ENCODE measurements at regions of chr19 and their contacts with region 1.

Region 1: DNA sequence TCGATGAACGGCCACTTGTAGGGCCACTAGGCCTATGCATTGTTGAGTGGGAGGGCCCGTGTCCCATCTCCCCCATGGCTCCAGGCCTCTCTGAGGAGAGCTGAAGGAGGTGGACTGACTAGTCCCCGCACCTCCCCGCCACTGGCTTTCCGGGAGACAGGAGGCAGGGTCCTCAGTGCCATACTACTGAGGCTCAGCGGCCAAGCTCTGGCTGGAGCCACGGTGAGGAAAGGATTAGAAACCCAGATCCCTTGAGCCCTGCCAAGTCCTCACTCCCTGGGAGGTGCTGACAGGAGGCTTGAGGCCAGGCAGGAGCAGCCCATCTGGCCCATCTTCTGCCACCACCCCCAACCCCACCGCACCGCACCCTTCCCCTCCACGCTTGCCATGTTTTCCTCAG is 29.0 kb downstream of the CCDC8 start:
- DNase-seq: peak; percentile 46 to 47
- ATAC-seq: peak; percentile 62 to 86 (median 78)
- H3K4me3 ChIP-seq: no peak overlapping the region
- H3K27ac ChIP-seq: peak overlapping the region in 3 of 10 donors; percentile 19 to 39 (median 30)
- H3K4me1 ChIP-seq: peaks cover 0 to 41% (median 18%) of the 10 kb centered on the region in 9 donors
- H3K27me3 ChIP-seq: no peaks in the 10 kb centered on the region
- CTCF ChIP-seq: no peak

Region 2: DNA sequence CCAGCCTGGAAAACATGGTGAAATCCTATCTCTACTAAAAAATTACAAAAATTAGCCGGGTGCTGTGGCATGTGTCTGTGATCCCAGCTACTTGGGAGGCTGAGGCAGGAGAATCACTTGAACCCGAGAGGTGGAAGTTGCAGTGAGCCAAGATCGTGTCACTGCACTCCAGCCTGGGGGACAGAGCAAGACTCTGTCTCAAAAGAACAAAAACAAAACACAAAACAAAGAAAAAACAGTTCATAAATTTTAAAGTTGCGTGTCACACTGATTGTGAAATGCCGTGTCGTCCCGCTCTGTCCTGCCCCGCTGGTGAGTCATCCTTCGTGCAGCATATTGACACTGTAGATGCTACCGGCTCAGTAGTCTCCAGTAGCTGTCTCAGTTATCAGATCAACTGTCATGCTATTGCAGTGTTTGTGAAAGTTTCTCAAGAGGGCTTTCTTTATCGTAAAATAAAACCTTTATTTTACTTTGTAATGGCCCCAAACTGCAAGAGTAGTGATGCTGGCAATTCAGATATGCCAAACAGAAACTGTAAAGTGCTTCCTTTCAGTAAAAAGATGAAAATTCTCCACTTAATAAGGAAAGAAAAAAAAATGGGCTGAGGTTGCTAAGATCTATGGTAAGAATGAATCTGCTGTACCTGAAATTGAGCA is 191.3 kb before region 1 on chr19:
- intact Hi-C with region 1: loop called in 1 of 10 experiments (anchors 5 kb)
- DNase-seq: no peak
- ATAC-seq: peak in 1 of 8 donors; percentile 73
- H3K4me3 ChIP-seq: no peak overlapping the region
- H3K27ac ChIP-seq: peak overlapping the region in 1 of 10 donors; percentile 60
- H3K4me1 ChIP-seq: peaks cover 0 to 20% (median 0%) of the 10 kb centered on the region in 9 donors
- H3K27me3 ChIP-seq: peaks cover 0 to 85% (median 55%) of the 10 kb centered on the region in 7 donors
- CTCF ChIP-seq: no peak

Region 3: DNA sequence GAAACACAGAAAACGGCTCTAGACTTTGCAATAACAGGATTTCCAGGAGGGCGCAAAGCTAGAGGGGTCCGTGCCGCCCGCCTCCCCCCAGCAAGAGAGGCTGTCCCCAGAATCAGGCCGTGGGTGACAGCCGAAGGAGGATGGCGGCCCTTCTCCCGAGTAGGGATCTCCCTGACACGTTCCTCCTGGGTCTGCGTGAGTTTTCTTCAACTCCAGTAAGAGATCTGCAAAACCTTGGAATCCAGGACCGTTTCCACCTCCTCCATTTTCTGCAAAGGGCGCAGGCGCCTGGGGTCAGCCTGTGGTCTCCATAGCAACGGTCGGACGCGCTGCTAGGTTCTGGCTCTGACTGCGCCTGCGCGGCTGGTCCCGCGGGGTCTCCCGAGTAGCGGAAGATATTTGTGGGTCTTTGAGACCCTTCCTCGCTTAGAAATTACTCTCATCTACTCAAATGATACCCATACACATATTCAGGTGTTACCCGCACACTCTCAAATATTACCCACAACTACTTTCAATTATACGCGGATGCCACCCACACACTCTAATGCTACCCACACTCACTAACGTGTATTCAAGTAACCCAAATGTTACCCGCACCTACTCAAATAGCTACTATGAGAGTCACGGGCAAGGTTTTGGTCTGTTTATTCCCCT is 42.2 kb after region 1 on chr19:
- intact Hi-C with region 1: no loop called
- DNase-seq: peak; percentile 59 to 75
- ATAC-seq: peak; percentile 43 to 88 (median 82)
- H3K4me3 ChIP-seq: peak overlapping the region; percentile 16 to 65 (median 52)
- H3K27ac ChIP-seq: peak overlapping the region in 4 of 10 donors; percentile 57 to 75 (median 59)
- H3K4me1 ChIP-seq: peaks cover 3 to 22% (median 12%) of the 10 kb centered on the region in 9 donors
- H3K27me3 ChIP-seq: peaks cover 0 to 55% (median 30%) of the 10 kb centered on the region in 7 donors
- CTCF ChIP-seq: no peak

Region 4: GRCh38 chr19:46513461-46514236 is 129.3 kb after region 1 on chr19:
- intact Hi-C with region 1: no loop called
- DNase-seq: peak; percentile 77 to 80
- ATAC-seq: peak; percentile 85 to 95 (median 91)
- H3K4me3 ChIP-seq: no peak overlapping the region
- H3K27ac ChIP-seq: no peak overlapping the region
- H3K4me1 ChIP-seq: peaks cover 0 to 8% (median 0%) of the 10 kb centered on the region in 9 donors
- H3K27me3 ChIP-seq: peaks cover 0 to 16% (median 5%) of the 10 kb centered on the region in 7 donors
- CTCF ChIP-seq: peak; percentile 77 to 99 (median 94)